ENCODE measurements at regions of chr2 and their contacts with region 1.

Region 1: GRCh38 chr2:158232476-158232875 is 130.8 kb downstream of the UPP2 start:
- DNase-seq: peak; percentile 88
- ATAC-seq: peak; percentile 88
- H3K4me3 ChIP-seq: no peak overlapping the region
- H3K27ac ChIP-seq: no peak overlapping the region
- H3K4me1 ChIP-seq: peaks cover 19% of the 10 kb centered on the region
- H3K27me3 ChIP-seq: peaks cover 1 to 23% of the 10 kb centered on the region in 2 experiments; a peak in 4 of 5 replicates
- CTCF ChIP-seq: no peak
- EP300 ChIP-seq: peak in 1 of 2 experiments; percentile 91; a peak in 2 of 4 replicates
- POLR2A ChIP-seq: no peak
- RAD21 ChIP-seq: no peak

Region 2: GRCh38 chr2:158144914-158145625 is 87.4 kb before region 1 on chr2:
- CTCF ChIA-PET with region 1: no interaction called
- POLR2A ChIA-PET with region 1: no interaction called
- in situ Hi-C with region 1: no loop called
- intact Hi-C with region 1: no loop called
- DNase-seq: no peak
- ATAC-seq: no peak
- H3K4me3 ChIP-seq: no peak overlapping the region
- H3K27ac ChIP-seq: no peak overlapping the region
- H3K4me1 ChIP-seq: peaks cover 22% of the 10 kb centered on the region
- H3K27me3 ChIP-seq: no peaks in the 10 kb centered on the region
- CTCF ChIP-seq: no peak
- EP300 ChIP-seq: no peak
- POLR2A ChIP-seq: no peak
- RAD21 ChIP-seq: no peak

Region 3: DNA sequence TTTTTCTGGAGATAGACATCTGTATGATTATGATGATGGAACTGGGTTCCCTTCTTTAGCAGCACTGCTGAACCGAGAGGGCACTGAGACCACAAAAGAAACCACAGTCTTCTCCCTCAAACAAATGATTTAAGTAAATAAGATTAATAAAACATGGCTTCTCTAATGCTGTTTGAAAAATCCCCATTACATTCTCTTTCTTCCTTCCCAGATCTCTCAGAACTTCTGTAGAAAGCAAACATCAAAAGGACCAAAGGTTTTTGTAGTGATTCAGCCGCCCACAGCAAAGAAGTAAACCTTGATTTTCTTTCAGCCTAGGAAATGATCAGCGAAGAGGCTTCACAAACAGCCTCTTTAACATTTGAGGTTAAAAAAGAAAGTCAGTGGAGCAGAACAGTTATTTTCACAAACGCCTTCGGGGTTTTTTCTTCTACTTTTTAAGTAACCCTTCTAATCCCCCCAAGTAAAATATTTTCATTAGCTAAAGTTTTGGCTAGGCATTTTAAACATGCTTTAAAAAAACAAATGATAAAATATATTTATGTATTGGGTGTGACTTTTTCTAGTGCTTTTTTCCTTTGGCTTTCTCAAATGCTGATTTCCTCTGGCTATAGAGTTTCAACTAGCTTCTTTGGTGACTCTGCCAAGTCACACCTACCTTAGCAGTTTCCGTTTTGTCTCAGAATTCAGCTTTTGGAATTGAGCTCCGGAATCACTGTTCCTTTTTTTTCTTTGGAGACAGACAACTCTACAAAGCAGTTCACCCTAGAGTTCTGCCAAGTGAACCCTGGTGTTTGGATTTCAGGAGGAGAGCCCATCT is 41.2 kb before region 1 on chr2:
- CTCF ChIA-PET with region 1: no interaction called
- POLR2A ChIA-PET with region 1: no interaction called
- in situ Hi-C with region 1: no loop called
- intact Hi-C with region 1: loop called (anchors 1 kb)
- DNase-seq: peak; percentile 95
- ATAC-seq: peak; percentile 76
- H3K4me3 ChIP-seq: peak overlapping the region; percentile 13 to 34 (median 19); a peak in 5 of 6 replicates
- H3K27ac ChIP-seq: peak overlapping the region; percentile 82
- H3K4me1 ChIP-seq: peaks cover 70% of the 10 kb centered on the region
- H3K27me3 ChIP-seq: no peaks in the 10 kb centered on the region
- CTCF ChIP-seq: no peak
- EP300 ChIP-seq: peak in 1 of 2 experiments; percentile 98; a peak in 2 of 4 replicates
- POLR2A ChIP-seq: no peak
- RAD21 ChIP-seq: no peak

Region 4: GRCh38 chr2:158990397-158991209 is 758.1 kb after region 1 on chr2:
- CTCF ChIA-PET with region 1: no interaction called
- POLR2A ChIA-PET with region 1: no interaction called
- in situ Hi-C with region 1: no loop called
- intact Hi-C with region 1: no loop called
- DNase-seq: no peak
- ATAC-seq: no peak
- H3K4me3 ChIP-seq: no peak overlapping the region
- H3K27ac ChIP-seq: no peak overlapping the region
- H3K4me1 ChIP-seq: peaks cover 15% of the 10 kb centered on the region
- H3K27me3 ChIP-seq: no peaks in the 10 kb centered on the region
- CTCF ChIP-seq: no peak
- EP300 ChIP-seq: no peak
- POLR2A ChIP-seq: no peak
- RAD21 ChIP-seq: no peak

Measured in HepG2 (cell line).